ENCODE measurements at regions of chr20 and their contacts with region 1.

Region 1: DNA sequence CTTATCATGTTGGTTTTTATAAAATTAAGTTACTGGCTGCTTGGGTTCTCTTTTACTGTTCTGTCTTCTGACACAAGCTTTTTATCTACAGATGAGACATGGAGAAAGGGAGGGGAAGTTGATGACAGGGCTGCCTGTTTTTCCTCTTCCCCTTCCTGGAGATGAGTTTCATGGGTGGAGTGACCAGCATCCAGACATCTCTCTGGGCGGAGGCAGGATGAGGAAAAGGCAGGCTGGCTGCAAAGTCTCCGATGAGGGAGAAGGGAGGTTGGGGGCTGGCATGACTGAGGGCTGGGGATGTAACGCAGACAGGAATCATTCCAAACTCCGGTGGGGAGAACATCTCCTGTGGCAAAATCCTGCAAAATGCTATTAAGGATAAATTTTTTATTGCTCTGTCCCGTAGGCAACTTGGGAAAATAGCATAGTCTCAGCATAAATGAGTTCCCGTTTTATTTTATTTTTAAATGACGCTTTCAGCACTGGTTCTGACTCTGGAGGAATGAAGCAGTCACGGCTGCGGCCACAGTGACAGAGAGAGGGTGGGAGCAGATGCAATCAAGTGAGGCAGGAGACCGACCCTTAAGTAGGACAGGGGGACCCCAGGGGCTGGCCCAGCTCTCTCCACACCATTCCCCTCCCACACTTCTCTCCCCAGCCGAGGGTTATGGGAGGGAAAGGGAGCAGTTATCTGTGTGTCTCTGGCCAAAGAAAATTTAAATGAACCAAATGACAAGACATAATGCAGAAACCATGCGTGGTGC is 108.8 kb upstream of the PMEPA1 start:
- DNase-seq: no peak
- H3K4me3 ChIP-seq: no peak overlapping the region
- H3K4me3 Mint-ChIP-seq: no peak overlapping the region
- H3K27ac ChIP-seq: no peak overlapping the region
- H3K27ac Mint-ChIP-seq: no peak overlapping the region
- H3K4me1 ChIP-seq: no peaks in the 10 kb centered on the region
- H3K4me1 Mint-ChIP-seq: no peaks in the 10 kb centered on the region
- H3K27me3 ChIP-seq: no peaks in the 10 kb centered on the region
- H3K27me3 Mint-ChIP-seq: peaks cover 11 to 29% of the 10 kb centered on the region in 2 donors

Region 2: GRCh38 chr20:57709931-57710799 is 108.4 kb before region 1 on chr20 and contains the start of gene PMEPA1:
- CTCF ChIA-PET with region 1: no interaction called
- POLR2A ChIA-PET with region 1: no interaction called
- DNase-seq: peak; percentile 88 to 97 (median 90)
- H3K4me3 ChIP-seq: peak within 1 kb of the TSS; percentile 84
- H3K4me3 Mint-ChIP-seq: peak within 1 kb of the TSS; percentile 84 to 94 (median 91)
- H3K27ac ChIP-seq: peak within 1 kb of the TSS; percentile 65
- H3K27ac Mint-ChIP-seq: peak within 1 kb of the TSS; percentile 41 to 99 (median 92)
- H3K4me1 ChIP-seq: peaks cover 16% of the 10 kb centered on the region
- H3K4me1 Mint-ChIP-seq: peaks cover 14 to 41% (median 17%) of the 10 kb centered on the region in 3 donors
- H3K27me3 ChIP-seq: peaks cover 9% of the 10 kb centered on the region
- H3K27me3 Mint-ChIP-seq: peaks cover 23 to 26% of the 10 kb centered on the region in 2 donors
- total RNA-seq, gene PMEPA1: 3.8 to 4.4 TPM

Region 3: GRCh38 chr20:58845706-58846320 is 1027.2 kb after region 1 on chr20:
- CTCF ChIA-PET with region 1: no interaction called
- POLR2A ChIA-PET with region 1: interaction called, 10 read pairs
- DNase-seq: no peak
- H3K4me3 ChIP-seq: no peak overlapping the region
- H3K4me3 Mint-ChIP-seq: no peak overlapping the region
- H3K27ac ChIP-seq: no peak overlapping the region
- H3K27ac Mint-ChIP-seq: no peak overlapping the region
- H3K4me1 ChIP-seq: no peaks in the 10 kb centered on the region
- H3K4me1 Mint-ChIP-seq: peaks cover 5 to 14% (median 9%) of the 10 kb centered on the region in 3 donors
- H3K27me3 ChIP-seq: peaks cover 14% of the 10 kb centered on the region
- H3K27me3 Mint-ChIP-seq: peaks cover 32 to 58% of the 10 kb centered on the region in 2 donors